ENCODE measurements at regions of chr3 and their contacts with region 1.

Region 1: GRCh38 chr3:102192575-102192974 is 242.2 kb upstream of the ZPLD1 start:
- DNase-seq: no peak
- CTCF ChIP-seq: no peak

Region 2: GRCh38 chr3:102124301-102125158 is 68.0 kb before region 1 on chr3:
- CTCF ChIA-PET with region 1: no interaction called
- POLR2A ChIA-PET with region 1: no interaction called
- DNase-seq: no peak
- CTCF ChIP-seq: no peak

Region 3: DNA sequence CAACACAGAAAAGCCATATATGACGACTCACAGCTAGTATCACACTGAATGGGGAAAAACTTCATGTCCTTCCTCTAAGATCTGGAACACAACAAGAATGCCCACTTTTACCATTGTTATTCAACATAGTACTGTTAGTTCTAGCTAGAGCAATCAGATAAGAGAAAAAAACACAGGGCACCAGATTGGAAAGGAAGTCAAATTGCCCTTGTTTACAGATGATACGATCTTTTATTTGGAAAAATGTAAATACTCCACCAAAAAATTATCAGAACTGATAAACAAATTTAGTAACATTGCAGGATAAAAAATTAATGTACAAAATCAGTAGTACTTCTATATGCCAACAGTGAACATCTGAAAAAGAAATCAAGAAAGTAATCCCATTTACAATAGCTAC is 38.8 kb before region 1 on chr3:
- CTCF ChIA-PET with region 1: no interaction called
- POLR2A ChIA-PET with region 1: no interaction called
- DNase-seq: no peak
- CTCF ChIP-seq: no peak

Region 4: GRCh38 chr3:102180291-102181039 is 12.1 kb before region 1 on chr3:
- CTCF ChIA-PET with region 1: interaction called, 14 read pairs
- POLR2A ChIA-PET with region 1: no interaction called
- DNase-seq: no peak
- CTCF ChIP-seq: no peak

Measured in GM10248 (cell line).